ENCODE measurements at regions of chr1 and their contacts with region 1.

Region 1: GRCh38 chr1:47432071-47433036 is 5.5 kb upstream of the FOXD2 start:
- DNase-seq: peak; percentile 66
- CTCF ChIP-seq: peak; percentile 65

Region 2: DNA sequence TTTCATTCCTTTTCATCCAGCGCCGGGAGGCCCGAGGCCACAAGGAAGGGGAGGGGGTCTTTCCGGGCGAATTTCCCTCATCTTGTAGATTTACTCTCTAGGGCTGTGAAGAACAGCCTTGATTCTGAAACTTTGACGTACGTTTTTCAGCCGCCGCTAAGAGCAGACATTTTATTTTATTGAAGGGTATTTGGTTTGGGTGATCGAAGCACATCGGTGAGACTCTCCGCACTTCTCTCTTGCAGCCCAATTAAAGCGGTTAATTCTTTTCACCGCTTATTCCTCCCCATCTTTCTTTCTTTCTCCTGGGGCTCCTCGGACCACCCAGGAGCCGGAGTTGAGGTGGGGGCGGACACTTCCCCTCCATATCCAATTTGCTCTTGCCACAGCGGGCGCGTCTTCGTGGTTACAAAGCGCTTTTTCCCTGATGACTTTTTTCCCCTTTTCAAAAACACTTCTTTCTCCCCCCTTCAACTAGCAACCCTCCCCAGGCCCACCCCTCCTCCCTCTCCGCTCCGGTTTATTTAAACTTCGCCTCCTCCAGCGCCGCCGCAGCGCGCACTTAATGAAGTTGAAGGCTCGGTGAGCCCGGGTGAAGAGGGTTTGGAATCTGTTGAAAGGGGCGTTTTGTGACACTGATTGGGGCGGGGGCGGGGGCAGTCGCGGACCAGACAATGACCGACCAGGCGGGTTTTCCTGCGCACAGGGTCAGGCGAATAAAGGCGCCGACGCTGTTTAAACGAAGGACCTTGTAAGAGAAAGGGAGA is 11.4 kb after region 1 on chr1:
- CTCF ChIA-PET with region 1: interaction called, 41 read pairs
- POLR2A ChIA-PET with region 1: no interaction called
- DNase-seq: no peak
- CTCF ChIP-seq: no peak

Region 3: DNA sequence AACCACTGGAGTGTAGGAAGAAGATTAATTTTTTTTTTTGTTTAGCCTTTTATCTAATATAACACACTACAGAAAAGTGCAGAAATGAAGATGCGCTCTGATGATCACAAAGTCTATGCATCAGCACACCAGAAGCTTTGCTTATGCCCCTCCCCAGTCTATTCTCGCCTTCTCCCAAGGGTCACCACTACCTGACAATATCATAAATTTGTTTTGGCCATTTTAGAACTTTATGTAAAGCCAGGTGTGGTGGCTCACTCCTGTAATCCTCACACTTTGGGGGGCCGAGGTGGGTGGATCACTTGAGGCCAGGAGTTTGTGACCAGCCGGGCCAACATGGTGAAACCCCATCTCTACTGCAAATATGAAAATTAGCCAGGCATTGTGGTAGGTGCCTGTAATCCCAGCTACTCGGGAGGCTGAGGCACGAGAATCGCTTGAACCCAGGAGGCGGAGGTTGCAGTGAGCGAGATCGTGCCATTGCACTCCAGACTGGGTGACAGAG is 236.8 kb after region 1 on chr1:
- CTCF ChIA-PET with region 1: no interaction called
- POLR2A ChIA-PET with region 1: no interaction called
- DNase-seq: no peak
- CTCF ChIP-seq: no peak

Region 4: GRCh38 chr1:47710329-47711071 is 278.1 kb after region 1 on chr1:
- CTCF ChIA-PET with region 1: interaction called, 226 read pairs
- POLR2A ChIA-PET with region 1: no interaction called
- DNase-seq: peak; percentile 91
- CTCF ChIP-seq: peak; percentile 95

Region 5: GRCh38 chr1:47755101-47755990 is 323.0 kb after region 1 on chr1:
- CTCF ChIA-PET with region 1: interaction called, 11 read pairs
- POLR2A ChIA-PET with region 1: no interaction called
- DNase-seq: peak; percentile 73
- CTCF ChIP-seq: peak; percentile 68